Activated CD4-positive, alpha-beta memory T cell treated with anti-CD3 and anti-CD28 coated beads, Interleukin-2, amount 10 ng/mL, durations not matched to agents 7 days and 5 days (primary cell): ENCODE measurements at regions of chr3 and their contacts with region 1.

Region 1: GRCh38 chr3:112734718-112735350 is 93.9 kb upstream of the CCDC80 start:
- DNase-seq: peak; percentile 71
- H3K4me3 Mint-ChIP-seq: no peak overlapping the region
- H3K27ac Mint-ChIP-seq: no peak overlapping the region
- H3K4me1 Mint-ChIP-seq: peaks cover 48% of the 10 kb centered on the region
- H3K27me3 Mint-ChIP-seq: no peaks in the 10 kb centered on the region

Region 2: DNA sequence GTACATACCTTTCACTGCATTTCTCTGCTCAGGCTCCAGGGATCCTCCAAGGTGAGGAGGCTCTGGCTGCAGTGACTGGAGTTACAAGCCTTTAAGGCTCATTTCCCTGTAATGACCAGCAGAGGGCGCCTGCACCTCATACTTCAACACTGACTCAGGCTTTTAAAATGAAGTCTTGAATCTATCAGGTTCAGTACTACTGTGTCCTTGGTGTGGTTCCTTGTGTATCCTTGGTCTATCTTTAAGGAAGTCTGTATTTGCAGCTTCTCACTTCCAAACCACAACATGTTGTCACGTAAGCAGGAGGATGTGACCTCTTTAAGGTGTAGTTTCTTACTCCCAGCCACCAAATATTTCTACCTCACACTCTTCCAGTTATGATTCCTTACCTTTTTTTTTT is 1017.2 kb before region 1 on chr3:
- CTCF ChIA-PET with region 1: no interaction called
- POLR2A ChIA-PET with region 1: no interaction called
- DNase-seq: peak; percentile 74
- H3K4me3 Mint-ChIP-seq: no peak overlapping the region
- H3K27ac Mint-ChIP-seq: peak overlapping the region; percentile 1
- H3K4me1 Mint-ChIP-seq: peaks cover 3% of the 10 kb centered on the region
- H3K27me3 Mint-ChIP-seq: no peaks in the 10 kb centered on the region

Region 3: DNA sequence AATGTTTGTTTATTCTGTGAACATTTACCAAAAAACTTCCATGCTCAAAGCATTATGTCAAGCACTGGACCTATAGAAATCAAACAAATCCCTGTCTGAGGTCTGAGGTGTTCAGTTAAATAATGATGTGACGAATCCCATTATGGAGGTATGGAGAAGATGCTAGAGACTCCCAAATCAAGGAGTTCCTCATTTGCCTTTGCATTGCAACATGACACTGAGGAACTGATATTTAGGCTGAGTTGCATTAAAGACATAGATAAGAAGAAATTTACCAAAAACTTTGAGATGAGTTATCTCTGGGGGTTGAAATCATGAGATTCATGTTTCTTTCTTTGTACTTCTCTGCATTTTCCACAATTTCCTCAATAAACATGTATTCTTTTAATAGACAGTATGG is 385.9 kb before region 1 on chr3:
- CTCF ChIA-PET with region 1: no interaction called
- POLR2A ChIA-PET with region 1: no interaction called
- DNase-seq: no peak
- H3K4me3 Mint-ChIP-seq: no peak overlapping the region
- H3K27ac Mint-ChIP-seq: no peak overlapping the region
- H3K4me1 Mint-ChIP-seq: peaks cover 11% of the 10 kb centered on the region
- H3K27me3 Mint-ChIP-seq: no peaks in the 10 kb centered on the region

Region 4: DNA sequence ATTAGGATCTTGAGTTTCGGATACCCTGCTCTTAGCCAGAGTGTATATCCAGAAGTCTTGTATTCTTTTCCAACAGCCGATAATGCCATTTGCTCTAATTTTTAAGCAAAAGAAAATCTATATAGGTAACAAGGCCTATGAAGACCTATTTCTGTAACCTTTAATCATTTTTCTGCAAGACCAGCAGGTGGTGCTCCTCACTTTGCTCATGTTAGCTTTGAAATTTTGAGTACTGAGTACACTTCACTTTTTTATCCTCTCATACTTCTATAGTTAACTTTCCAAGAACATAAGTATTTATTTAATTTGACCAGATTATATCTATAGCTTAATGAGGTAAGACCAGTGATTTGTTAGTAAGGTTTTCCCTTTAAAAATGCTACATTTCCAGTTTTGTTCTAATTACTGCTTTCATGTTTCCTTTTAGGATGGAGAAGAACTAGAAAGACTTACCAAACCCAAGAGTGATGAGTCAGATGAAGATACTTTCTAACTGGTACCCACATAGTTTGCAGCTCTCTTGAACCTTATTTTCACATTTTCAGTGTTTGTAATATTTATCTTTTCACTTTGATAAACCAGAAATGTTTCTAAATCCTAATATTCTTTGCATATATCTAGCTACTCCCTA is 152.5 kb before region 1 on chr3:
- CTCF ChIA-PET with region 1: interaction called, 16 read pairs
- POLR2A ChIA-PET with region 1: no interaction called
- DNase-seq: peak; percentile 51
- H3K4me3 Mint-ChIP-seq: no peak overlapping the region
- H3K27ac Mint-ChIP-seq: no peak overlapping the region
- H3K4me1 Mint-ChIP-seq: peaks cover 11% of the 10 kb centered on the region
- H3K27me3 Mint-ChIP-seq: no peaks in the 10 kb centered on the region

Region 5: DNA sequence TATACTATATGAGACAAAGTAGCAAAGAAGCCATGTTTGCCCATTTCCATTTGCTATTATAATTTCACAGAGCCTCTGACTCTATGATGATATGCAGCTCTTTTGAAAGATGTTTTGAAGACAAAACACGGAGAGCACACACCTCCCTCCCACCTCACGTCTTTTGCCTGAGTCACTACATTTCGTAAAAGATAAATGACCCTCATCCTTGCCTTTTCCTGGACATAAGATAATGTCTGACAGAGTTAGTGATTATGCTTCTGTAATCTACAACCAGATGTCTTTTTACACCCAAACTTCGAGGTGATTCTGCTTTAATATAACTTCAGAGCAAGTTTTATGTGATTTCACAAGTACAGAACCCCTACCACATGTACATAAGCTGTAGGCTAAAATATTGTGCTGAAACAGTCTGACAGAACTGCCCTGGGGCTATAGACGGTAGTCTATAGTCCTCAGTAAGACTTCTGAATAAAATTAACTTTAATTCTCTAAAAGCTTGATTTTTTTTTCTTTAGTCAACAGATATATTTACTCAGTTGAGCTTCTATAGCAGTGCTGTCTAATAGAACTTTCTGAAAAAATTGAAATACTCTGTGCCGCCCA is 11.9 kb after region 1 on chr3:
- CTCF ChIA-PET with region 1: interaction called, 24 read pairs
- POLR2A ChIA-PET with region 1: interaction called, 3 read pairs
- DNase-seq: no peak
- H3K4me3 Mint-ChIP-seq: no peak overlapping the region
- H3K27ac Mint-ChIP-seq: no peak overlapping the region
- H3K4me1 Mint-ChIP-seq: peaks cover 32% of the 10 kb centered on the region
- H3K27me3 Mint-ChIP-seq: no peaks in the 10 kb centered on the region

Region 6: DNA sequence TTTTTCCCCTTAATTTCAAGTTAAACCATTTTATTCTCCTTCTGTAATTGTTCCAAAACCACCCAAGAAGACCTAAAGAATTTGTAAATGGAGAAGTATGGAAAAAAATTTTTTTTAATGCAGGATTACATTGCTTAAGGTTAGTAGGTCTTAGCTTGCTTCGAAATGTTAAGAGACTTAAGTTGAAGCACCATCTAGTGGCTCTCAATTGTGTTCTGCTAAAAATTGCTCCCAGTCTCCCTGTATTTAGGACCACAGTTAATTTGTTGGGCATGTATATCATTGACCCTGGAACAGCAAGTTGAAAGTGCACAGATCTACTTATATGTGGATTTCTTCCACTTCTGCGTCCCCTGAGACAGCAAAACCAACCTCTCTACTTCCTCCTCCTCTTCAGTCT is 79.4 kb after region 1 on chr3:
- CTCF ChIA-PET with region 1: interaction called, 32 read pairs
- POLR2A ChIA-PET with region 1: no interaction called
- DNase-seq: no peak
- H3K4me3 Mint-ChIP-seq: no peak overlapping the region
- H3K27ac Mint-ChIP-seq: no peak overlapping the region
- H3K4me1 Mint-ChIP-seq: peaks cover 24% of the 10 kb centered on the region
- H3K27me3 Mint-ChIP-seq: no peaks in the 10 kb centered on the region

Region 7: GRCh38 chr3:112979240-112979832 is 244.5 kb after region 1 on chr3:
- CTCF ChIA-PET with region 1: interaction called, 88 read pairs
- POLR2A ChIA-PET with region 1: interaction called, 11 read pairs
- DNase-seq: no peak
- H3K4me3 Mint-ChIP-seq: no peak overlapping the region
- H3K27ac Mint-ChIP-seq: no peak overlapping the region
- H3K4me1 Mint-ChIP-seq: peaks cover 56% of the 10 kb centered on the region
- H3K27me3 Mint-ChIP-seq: no peaks in the 10 kb centered on the region

Region 8: GRCh38 chr3:113079218-113079961 is 344.6 kb after region 1 on chr3:
- CTCF ChIA-PET with region 1: no interaction called
- POLR2A ChIA-PET with region 1: no interaction called
- DNase-seq: no peak
- H3K4me3 Mint-ChIP-seq: no peak overlapping the region
- H3K27ac Mint-ChIP-seq: no peak overlapping the region
- H3K4me1 Mint-ChIP-seq: no peaks in the 10 kb centered on the region
- H3K27me3 Mint-ChIP-seq: no peaks in the 10 kb centered on the region